HEK293 (cell line): ENCODE measurements at regions of chr11 and their contacts with region 1.

Region 1: DNA sequence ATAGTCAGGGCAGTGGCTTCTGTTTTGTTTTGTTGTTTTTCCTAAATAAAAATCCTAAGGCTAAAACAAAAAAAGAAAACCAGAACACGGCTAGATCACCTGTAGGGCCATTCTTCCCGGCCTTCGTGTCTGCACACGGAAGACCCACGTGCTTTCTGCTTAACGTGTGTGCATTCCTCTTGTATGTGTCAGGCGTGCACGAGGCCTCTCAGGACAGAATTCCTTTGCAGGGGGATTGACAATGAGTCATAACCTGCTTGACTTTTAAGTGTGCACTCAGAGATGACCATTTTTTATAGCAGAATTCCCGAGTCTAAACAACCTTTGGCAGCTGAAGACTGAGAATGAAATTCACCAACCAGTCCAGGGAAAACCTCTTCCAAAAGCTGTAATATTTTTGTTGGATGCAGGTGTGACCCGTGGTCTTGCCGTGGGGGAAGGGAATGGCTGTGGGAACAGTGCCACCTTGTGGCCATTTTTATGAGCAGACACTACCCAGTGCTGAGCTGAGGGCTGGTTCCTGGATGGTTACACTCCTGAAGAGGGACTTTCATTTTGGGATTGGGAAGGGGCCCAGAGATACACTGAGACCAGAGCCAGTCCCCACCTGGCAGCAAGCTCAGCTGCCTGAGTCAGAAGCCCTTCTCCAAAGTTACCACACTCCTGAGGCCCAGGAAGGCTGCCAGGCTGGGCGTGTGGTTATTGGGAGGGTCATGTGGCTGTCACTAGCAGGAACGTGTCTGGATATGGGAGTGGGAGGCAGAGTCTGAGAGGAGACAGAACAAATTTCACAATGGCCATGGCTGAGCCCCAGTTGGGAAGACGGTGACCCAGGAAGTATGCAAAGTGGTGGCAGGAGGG is 35.8 kb upstream of the DKK3 start:
- H3K4me3 ChIP-seq: no peak overlapping the region
- H3K27ac ChIP-seq: no peak overlapping the region
- H3K4me1 ChIP-seq: no peaks in the 10 kb centered on the region
- CTCF ChIP-seq: peak; percentile 49; the same call in 1 of the 2 replicates

Region 2: DNA sequence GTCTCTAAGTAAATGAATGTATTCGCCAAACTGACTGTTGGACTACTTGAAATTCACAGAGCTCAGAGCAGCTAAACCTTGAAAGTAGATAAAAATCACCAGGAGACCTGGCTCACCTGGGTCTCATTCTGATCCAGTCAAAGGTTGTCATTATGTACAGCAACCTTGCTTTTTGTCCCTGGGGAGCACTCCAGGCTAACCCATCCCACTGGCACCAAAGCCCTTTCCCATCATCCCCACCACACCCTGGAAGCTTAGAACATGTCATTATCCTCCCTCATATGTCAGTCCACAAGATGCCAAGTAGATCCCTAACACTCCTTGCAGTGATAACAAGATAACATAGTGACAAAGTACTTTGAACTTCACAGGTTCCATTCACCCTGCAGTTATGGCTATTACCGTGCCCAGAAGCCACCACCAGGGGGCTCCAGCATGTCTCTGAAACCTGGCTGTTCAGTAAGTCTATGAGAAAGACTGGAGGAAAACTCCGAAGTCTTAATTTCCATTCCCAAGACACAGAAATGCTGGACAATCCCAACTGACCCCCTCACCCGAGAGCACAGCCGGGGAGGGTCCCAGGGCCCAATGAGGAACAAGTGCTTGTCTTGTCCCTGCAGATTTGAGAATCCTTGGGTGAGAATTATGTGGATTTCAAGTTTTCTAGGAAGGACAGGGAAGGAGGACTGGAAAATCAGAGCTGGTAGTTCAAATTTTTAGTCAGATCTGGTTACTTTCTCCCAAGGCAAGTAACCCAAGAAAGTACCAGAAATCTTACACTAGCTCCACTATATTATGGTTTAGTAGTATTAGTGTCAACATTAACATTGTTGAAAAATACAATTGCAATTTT is 245.4 kb before region 1 on chr11:
- CTCF ChIA-PET with region 1: interaction called, 18 read pairs
- POLR2A ChIA-PET with region 1: no interaction called
- H3K4me3 ChIP-seq: no peak overlapping the region
- H3K27ac ChIP-seq: no peak overlapping the region
- H3K4me1 ChIP-seq: no peaks in the 10 kb centered on the region
- CTCF ChIP-seq: no peak

Region 3: DNA sequence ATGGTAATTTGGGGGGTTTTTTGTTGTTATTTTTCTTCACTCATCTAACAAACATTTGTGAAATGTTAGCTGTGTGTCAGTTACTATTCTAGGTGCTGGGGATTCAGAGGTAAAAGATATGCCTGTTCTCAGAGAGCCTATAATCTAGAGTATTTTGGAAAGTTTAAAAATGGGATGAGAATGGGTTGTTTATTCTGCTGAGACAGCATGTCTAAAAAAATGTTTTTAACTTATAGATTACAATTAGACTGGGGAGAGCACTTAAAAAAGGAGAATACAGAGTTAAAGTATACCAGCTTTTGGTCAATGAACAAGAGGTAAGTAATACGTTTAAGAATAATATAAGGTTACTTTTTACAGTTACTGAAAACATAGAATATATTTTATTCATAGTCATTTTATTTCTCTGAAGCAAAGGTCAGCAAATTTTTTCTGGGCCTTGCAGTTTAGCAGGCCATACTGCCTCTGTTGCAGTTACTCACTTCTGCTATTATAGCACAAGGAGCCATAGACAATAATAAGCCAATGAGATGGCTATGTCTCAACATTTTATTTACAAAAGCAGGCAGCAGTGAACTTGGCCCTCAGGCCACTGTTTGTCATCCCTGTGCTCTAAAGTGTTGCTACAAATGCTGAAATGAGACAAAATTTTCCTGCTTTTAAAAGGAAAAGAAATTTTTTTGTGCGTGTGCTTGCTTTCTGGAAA is 95.8 kb before region 1 on chr11:
- CTCF ChIA-PET with region 1: interaction called, 11 read pairs
- POLR2A ChIA-PET with region 1: no interaction called
- H3K4me3 ChIP-seq: no peak overlapping the region
- H3K27ac ChIP-seq: no peak overlapping the region
- H3K4me1 ChIP-seq: no peaks in the 10 kb centered on the region
- CTCF ChIP-seq: no peak

Region 4: DNA sequence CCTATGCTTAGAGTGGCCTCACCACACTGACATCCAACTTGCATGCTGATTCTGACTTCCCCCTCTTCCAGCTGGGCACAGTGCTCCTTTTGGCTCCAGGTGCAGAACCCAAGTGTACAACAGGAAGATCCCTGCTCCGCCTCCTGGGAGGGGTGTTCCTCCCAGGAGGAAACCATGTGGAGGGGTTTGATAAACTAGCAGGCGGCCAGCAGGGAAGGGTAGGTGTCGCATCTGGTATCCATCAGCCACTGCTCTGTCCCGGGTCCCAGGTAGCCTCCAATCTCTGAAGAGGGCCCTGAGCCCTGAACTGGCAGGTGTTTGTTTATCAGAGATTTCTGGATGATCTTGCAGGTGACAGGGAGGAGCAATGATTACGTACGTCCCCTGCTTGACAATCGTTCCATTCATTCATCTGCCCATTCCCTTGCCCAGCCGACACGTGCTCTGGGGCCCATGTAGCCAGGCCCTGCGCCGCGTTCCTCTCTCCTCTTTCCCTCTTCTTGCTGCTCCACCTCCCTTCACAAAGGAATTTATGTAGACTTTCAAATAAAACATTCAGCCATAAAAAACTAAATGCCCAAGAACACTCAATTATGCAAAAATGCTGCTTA is 25.0 kb after region 1 on chr11:
- CTCF ChIA-PET with region 1: no interaction called
- POLR2A ChIA-PET with region 1: no interaction called
- H3K4me3 ChIP-seq: no peak overlapping the region
- H3K27ac ChIP-seq: no peak overlapping the region
- H3K4me1 ChIP-seq: no peaks in the 10 kb centered on the region
- CTCF ChIP-seq: no peak

Region 5: DNA sequence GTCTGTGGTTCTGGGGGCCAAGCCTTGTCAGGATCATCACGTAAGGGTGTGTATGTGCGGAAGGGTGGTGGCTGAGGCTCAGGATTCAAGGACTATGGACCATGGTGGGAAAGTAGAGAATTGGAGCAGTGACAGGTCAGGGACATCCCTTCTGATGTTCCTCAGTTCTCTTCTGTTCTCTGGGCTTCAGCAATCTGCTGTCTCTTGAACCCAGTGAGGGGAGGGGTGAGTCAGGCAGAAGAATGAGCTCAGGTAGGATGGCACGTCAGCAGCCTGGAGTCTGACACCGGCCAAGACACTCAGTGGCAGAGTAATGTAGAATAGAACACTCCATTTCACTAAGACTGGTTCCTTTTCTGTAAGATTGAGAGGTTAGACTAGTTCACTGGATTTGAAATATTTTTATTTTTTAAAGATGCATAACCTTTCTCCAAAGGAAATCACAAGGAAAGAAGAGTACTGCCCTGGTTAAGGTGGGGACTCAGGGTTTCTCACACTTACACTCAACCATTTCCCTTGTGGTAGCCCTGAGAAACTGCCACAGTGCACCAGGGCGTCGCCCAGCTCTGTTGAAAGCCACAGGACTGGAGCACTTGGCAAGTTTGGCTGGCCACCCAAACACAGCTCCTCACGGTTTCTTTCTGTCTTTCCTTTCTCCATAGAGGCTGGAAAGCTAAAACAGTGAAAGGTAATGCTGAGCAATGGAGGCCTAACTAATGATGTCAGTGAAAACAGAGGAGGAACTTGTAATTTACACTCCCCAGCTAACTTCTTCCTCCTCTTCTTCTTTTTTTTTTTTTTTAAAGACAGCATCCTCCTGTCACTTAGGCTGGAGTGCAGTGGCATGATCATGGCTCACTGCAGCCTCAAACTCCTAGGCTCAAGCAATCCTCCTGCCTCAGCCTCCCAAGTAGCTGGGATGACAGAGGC is 43.2 kb after region 1 on chr11:
- CTCF ChIA-PET with region 1: interaction called, 16 read pairs
- POLR2A ChIA-PET with region 1: interaction called, 3 read pairs
- H3K4me3 ChIP-seq: no peak overlapping the region
- H3K27ac ChIP-seq: no peak overlapping the region
- H3K4me1 ChIP-seq: no peaks in the 10 kb centered on the region
- CTCF ChIP-seq: no peak

Region 6: GRCh38 chr11:12281571-12282478 is 237.6 kb after region 1 on chr11:
- CTCF ChIA-PET with region 1: interaction called, 374 read pairs
- POLR2A ChIA-PET with region 1: interaction called, 3 read pairs
- H3K4me3 ChIP-seq: no peak overlapping the region
- H3K27ac ChIP-seq: no peak overlapping the region
- H3K4me1 ChIP-seq: no peaks in the 10 kb centered on the region
- CTCF ChIP-seq: peak; percentile 65